Aorta (tissue), 5 donors: ENCODE measurements at regions of chr4 and their contacts with region 1.

Region 1: DNA sequence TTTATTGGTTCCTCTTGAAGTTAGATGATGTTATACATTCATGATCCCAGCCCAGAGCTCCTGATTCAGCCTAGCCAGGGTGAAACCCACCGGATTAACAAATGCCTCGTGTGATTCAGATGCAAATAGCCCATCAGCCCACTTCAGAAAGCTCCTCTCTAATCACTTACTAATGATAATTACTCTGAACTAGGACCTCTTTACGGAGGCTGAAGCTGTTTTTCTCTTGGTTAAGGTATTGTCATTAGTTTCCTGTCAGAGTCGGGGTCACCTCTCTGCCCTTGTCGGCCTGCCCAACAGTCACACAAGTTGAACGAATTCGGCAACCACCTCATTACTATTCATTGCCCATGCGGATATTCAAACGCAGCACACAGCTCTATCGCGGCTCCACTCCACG is 36.6 kb downstream of the ZFP42 start:
- DNase-seq: no peak
- ATAC-seq: no peak
- H3K4me3 ChIP-seq: no peak overlapping the region
- H3K27ac ChIP-seq: no peak overlapping the region
- H3K4me1 ChIP-seq: no peaks in the 10 kb centered on the region
- H3K27me3 ChIP-seq: no peaks in the 10 kb centered on the region

Region 2: GRCh38 chr4:188196134-188196735 is 164.1 kb after region 1 on chr4:
- intact Hi-C with region 1: loop called in 1 of 2 experiments (anchors 10 kb)
- DNase-seq: no peak
- ATAC-seq: no peak
- H3K4me3 ChIP-seq: peak overlapping the region in 1 of 2 donors; percentile 29
- H3K27ac ChIP-seq: no peak overlapping the region
- H3K4me1 ChIP-seq: peaks cover 0 to 4% of the 10 kb centered on the region in 2 donors
- H3K27me3 ChIP-seq: no peaks in the 10 kb centered on the region